GM12878 (cell line): ENCODE measurements at regions of chr2 and their contacts with region 1.

Region 1: DNA sequence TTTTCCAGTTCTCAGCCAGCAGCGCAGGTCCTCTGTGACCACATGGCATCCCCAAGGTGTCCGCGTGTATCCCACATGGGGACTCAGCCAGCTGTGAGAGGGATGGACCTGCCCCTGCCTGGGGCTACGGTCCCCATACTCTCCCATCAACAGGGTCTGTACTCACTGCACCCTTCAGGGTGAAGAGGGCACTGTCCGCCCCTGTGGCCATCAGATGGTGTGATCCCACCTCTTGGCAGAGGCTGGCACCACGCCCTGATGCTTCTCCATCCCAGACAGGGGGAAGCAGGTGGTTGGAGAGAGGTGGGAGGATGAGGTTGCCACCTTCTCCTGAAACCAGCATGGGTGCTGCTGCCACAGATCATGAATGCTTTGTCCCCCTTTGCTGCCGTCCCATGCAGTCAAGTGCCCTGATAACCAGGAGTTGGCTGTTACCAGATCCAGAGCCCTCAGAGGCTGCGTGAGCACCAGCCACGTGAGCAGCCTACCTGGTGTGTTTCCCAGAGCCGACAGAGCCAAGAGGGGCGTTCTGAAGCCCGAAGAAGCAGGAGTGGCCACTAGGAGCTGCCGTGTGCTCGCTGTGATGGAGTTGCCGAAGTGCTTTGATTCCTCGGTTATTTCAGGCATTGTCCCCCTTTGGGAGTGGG is 93.9 kb downstream of the SH3RF3 start:
- DNase-seq: no peak
- ATAC-seq: no peak
- H3K4me3 ChIP-seq: no peak overlapping the region
- H3K27ac ChIP-seq: no peak overlapping the region
- H3K4me1 ChIP-seq: peaks cover 18% of the 10 kb centered on the region
- H3K27me3 ChIP-seq: no peaks in the 10 kb centered on the region
- CTCF ChIP-seq: no peak
- EP300 ChIP-seq: no peak
- POLR2A ChIP-seq: no peak
- RAD21 ChIP-seq: no peak

Region 2: GRCh38 chr2:109185821-109186570 is 37.0 kb before region 1 on chr2:
- CTCF ChIA-PET with region 1: no interaction called
- POLR2A ChIA-PET with region 1: no interaction called
- RAD21 ChIA-PET with region 1: no interaction called
- SMC1A ChIA-PET with region 1: no interaction called
- in situ Hi-C with region 1: no loop called
- intact Hi-C with region 1: no loop called
- DNase-seq: no peak
- ATAC-seq: no peak
- H3K4me3 ChIP-seq: no peak overlapping the region
- H3K27ac ChIP-seq: no peak overlapping the region
- H3K4me1 ChIP-seq: no peaks in the 10 kb centered on the region
- H3K27me3 ChIP-seq: no peaks in the 10 kb centered on the region
- CTCF ChIP-seq: no peak
- EP300 ChIP-seq: no peak
- POLR2A ChIP-seq: no peak
- RAD21 ChIP-seq: no peak

Region 3: GRCh38 chr2:109260886-109261700 is 38.1 kb after region 1 on chr2:
- CTCF ChIA-PET with region 1: interaction called, 5 read pairs
- POLR2A ChIA-PET with region 1: no interaction called
- RAD21 ChIA-PET with region 1: interaction called, 10 read pairs
- SMC1A ChIA-PET with region 1: interaction called, 13 read pairs
- in situ Hi-C with region 1: no loop called
- intact Hi-C with region 1: no loop called
- DNase-seq: no peak
- ATAC-seq: peak; percentile 84
- H3K4me3 ChIP-seq: no peak overlapping the region
- H3K27ac ChIP-seq: no peak overlapping the region
- H3K4me1 ChIP-seq: peaks cover 4% of the 10 kb centered on the region
- H3K27me3 ChIP-seq: no peaks in the 10 kb centered on the region
- CTCF ChIP-seq: peak; percentile 29 to 31 (median 29); a peak in 4 of 6 replicates
- EP300 ChIP-seq: no peak
- POLR2A ChIP-seq: no peak
- RAD21 ChIP-seq: peak; percentile 53